ENCODE measurements at regions of chr17 and their contacts with region 1.

Region 1: DNA sequence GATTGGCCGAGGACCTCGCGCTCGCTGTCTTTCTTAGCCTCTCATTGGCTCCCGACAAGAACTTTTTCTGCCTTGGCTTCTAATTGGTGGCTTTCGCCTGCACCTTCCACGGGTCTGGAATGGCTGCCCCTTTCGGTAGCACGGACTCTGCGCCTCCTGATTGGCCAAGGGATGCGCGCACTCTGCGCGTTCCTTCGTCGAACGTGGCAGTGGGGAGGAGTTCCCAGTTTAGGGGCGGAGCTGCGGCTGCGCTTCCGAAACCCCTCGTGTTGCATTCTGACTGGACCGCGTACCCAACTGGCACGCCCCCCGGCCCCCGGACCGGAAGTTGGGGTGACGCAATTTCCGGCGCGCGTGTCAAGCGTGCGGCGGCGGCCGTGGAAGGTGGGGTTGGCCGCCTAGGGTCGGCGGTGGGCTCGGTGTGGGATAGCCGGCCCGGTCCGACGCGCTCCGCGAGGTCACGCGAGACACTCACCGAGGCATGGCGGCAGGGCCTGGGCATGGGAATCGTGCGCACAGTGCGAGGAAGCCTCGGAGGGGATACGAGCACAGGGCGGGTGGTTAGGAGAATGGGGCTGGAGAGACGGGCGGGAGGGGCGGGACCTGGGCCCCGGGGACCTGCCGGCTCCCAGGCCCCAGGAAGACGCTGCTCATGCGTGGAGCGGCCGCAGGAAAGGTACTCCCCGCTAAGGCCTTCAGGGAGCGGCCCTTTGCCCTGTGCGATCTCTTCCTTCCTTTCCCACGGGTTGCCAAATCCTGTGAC is 602 bp upstream of the P4HB start:
- DNase-seq: peak; percentile 99 to 100
- ATAC-seq: peak; percentile 89 to 92 (median 90)
- H3K4me3 ChIP-seq: peak overlapping the region; percentile 78
- H3K27ac ChIP-seq: peak overlapping the region; percentile 98
- H3K4me1 ChIP-seq: peaks cover 34% of the 10 kb centered on the region
- H3K27me3 ChIP-seq: no peaks in the 10 kb centered on the region
- CTCF ChIP-seq: peak; percentile 16

Region 2: GRCh38 chr17:81821603-81822311 is 39.2 kb before region 1 on chr17:
- intact Hi-C with region 1: loop called in 1 of 2 experiments (anchors 5 kb)
- DNase-seq: peak; percentile 86 to 95
- ATAC-seq: peak; percentile 75 to 86 (median 82)
- H3K4me3 ChIP-seq: peak overlapping the region; percentile 18
- H3K27ac ChIP-seq: peak overlapping the region; percentile 89
- H3K4me1 ChIP-seq: peaks cover 20% of the 10 kb centered on the region
- H3K27me3 ChIP-seq: peaks cover 0 to 1% (median 0%) of the 10 kb centered on the region in 3 donors
- CTCF ChIP-seq: peak; percentile 70

Region 3: GRCh38 chr17:81833921-81834814 is 26.8 kb before region 1 on chr17:
- intact Hi-C with region 1: loop called in 1 of 2 experiments (anchors 2 kb)
- DNase-seq: peak in 1 of 2 donors; percentile 75
- ATAC-seq: peak; percentile 2 to 18 (median 8)
- H3K4me3 ChIP-seq: peak overlapping the region; percentile 72
- H3K27ac ChIP-seq: peak overlapping the region; percentile 98
- H3K4me1 ChIP-seq: peaks cover 31% of the 10 kb centered on the region
- H3K27me3 ChIP-seq: no peaks in the 10 kb centered on the region
- CTCF ChIP-seq: no peak

Region 4: GRCh38 chr17:81842725-81843504 is 18.0 kb before region 1 on chr17:
- intact Hi-C with region 1: loop called in 1 of 2 experiments (anchors 2 kb)
- DNase-seq: peak; percentile 75 to 86
- ATAC-seq: peak; percentile 36 to 54 (median 50)
- H3K4me3 ChIP-seq: no peak overlapping the region
- H3K27ac ChIP-seq: peak overlapping the region; percentile 98
- H3K4me1 ChIP-seq: peaks cover 55% of the 10 kb centered on the region
- H3K27me3 ChIP-seq: no peaks in the 10 kb centered on the region
- CTCF ChIP-seq: no peak

Measured in psoas muscle (tissue), 8 donors.